GM10248 (cell line): ENCODE measurements at regions of chr4 and their contacts with region 1.

Region 1: GRCh38 chr4:88533937-88534750 is 10.6 kb upstream of the PYURF start:
- DNase-seq: no peak
- CTCF ChIP-seq: no peak

Region 2: GRCh38 chr4:88523325-88524129 is 10.6 kb before region 1 on chr4 and contains the start of gene PYURF:
- CTCF ChIA-PET with region 1: interaction called, 47 read pairs
- POLR2A ChIA-PET with region 1: no interaction called
- DNase-seq: peak; percentile 88
- CTCF ChIP-seq: no peak

Region 3: DNA sequence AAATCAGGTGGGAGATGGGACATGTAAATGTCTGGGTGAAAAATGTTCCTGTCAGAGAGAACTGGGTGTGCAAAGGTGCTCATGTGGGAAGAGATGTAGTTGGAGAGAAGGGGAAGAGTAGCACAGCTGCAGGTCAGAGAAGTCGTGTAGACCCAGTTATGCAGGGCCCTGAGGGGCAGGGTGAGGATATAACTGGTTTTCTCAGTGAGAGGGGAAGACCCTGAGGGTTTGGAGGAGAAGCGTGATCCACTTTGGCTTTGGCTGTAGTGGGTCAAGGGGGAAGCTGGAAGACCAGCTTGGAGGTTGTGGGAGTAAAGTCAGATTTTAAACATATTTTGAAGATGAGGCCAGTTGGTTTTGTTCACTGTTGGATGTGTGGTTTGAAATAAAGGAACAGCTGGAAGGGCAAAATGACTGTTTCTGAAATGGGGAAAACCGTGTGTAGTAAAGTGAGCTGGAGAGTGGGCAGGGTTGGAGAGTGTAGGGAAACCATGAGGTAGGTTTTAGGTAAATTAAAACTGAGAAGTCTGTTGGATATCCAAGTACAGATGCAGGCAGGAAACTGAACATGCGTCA is 119.3 kb after region 1 on chr4:
- CTCF ChIA-PET with region 1: interaction called, 12 read pairs
- POLR2A ChIA-PET with region 1: no interaction called
- DNase-seq: no peak
- CTCF ChIP-seq: no peak

Region 4: GRCh38 chr4:88659055-88659889 is 125.1 kb after region 1 on chr4:
- CTCF ChIA-PET with region 1: interaction called, 34 read pairs
- POLR2A ChIA-PET with region 1: no interaction called
- DNase-seq: peak; percentile 47
- CTCF ChIP-seq: peak; percentile 73

Region 5: DNA sequence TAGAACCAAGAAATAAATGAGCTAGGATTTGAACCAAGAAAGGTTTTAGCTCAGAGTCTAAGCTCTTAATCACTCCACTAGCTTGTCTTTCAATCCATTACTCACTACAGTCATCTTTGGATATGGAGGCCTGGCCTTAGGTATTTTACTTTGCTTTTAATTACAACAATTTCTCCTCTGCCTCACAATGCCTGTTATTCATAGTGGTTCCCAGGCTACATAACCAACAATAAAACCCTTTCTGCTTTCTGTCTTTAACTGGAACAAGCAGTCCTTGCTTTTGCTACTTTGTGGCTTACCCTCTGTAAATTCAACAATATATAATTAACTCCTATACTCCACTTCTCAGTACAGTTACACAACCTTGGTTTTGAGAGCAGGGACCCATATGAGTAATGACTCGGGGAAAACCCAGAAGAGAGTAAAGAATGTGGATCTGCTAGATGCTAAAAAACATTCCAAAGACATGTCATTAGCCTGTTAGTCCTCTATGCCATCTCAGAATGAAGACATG is 258.2 kb after region 1 on chr4:
- CTCF ChIA-PET with region 1: interaction called, 11 read pairs
- POLR2A ChIA-PET with region 1: no interaction called
- DNase-seq: peak; percentile 8
- CTCF ChIP-seq: no peak

Region 6: GRCh38 chr4:88818631-88819470 is 284.7 kb after region 1 on chr4:
- CTCF ChIA-PET with region 1: interaction called, 14 read pairs
- POLR2A ChIA-PET with region 1: no interaction called
- DNase-seq: peak; percentile 14
- CTCF ChIP-seq: peak; percentile 48

Region 7: GRCh38 chr4:89024051-89024675 is 490.0 kb after region 1 on chr4:
- CTCF ChIA-PET with region 1: interaction called, 44 read pairs
- POLR2A ChIA-PET with region 1: no interaction called
- DNase-seq: peak; percentile 59
- CTCF ChIP-seq: peak; percentile 74